GM12878 (cell line): ENCODE measurements at regions of chr6 and their contacts with region 1.

Region 1: DNA sequence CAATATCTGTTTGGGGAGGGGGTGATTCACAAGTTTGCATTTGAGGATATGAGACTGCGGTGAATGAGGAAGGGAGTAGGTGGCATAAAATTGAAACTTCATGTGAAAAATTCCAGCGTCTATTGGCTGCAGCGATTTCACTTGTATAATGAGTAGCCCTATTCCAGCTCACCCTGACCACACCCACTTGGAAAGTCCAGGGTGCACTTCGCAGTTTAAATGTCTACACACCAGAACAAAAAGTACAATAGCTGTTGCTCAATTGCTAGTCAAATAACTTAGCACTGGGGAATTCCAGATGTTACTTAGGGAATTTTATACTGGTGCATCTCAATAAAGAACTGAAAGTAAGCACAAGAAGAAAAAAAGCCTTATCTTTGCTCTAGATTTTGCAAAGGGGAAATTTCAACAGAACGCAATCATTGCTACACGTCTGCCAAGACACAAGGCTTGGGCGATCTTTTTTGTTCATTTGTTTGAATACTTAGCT is 6.3 kb downstream of the TNFAIP3 start:
- DNase-seq: peak; percentile 95
- ATAC-seq: peak; percentile 54
- H3K4me3 ChIP-seq: peak overlapping the region; percentile 99
- H3K27ac ChIP-seq: peak overlapping the region; percentile 88
- H3K4me1 ChIP-seq: no peaks in the 10 kb centered on the region
- H3K27me3 ChIP-seq: no peaks in the 10 kb centered on the region
- CTCF ChIP-seq: no peak
- EP300 ChIP-seq: peak; percentile 62 to 64; a peak in 2 of 4 replicates
- POLR2A ChIP-seq: 0 out of 2 replicates have a peak, but pooled peaks have one; percentile 27
- RAD21 ChIP-seq: no peak

Region 2: GRCh38 chr6:137661601-137662000 is 211.7 kb before region 1 on chr6:
- CTCF ChIA-PET with region 1: interaction called, 11 read pairs
- POLR2A ChIA-PET with region 1: interaction called, 3 read pairs
- RAD21 ChIA-PET with region 1: interaction called, 6 read pairs
- SMC1A ChIA-PET with region 1: interaction called, 7 read pairs
- in situ Hi-C with region 1: no loop called
- intact Hi-C with region 1: loop called (anchors 5 kb)
- DNase-seq: no peak
- ATAC-seq: peak; percentile 69
- H3K4me3 ChIP-seq: no peak overlapping the region
- H3K27ac ChIP-seq: no peak overlapping the region
- H3K4me1 ChIP-seq: peaks cover 5% of the 10 kb centered on the region; the same call in 1 of the 2 replicates
- H3K27me3 ChIP-seq: no peaks in the 10 kb centered on the region
- CTCF ChIP-seq: peak; percentile 51 to 75 (median 68)
- EP300 ChIP-seq: no peak
- POLR2A ChIP-seq: no peak
- RAD21 ChIP-seq: peak; percentile 66

Region 3: DNA sequence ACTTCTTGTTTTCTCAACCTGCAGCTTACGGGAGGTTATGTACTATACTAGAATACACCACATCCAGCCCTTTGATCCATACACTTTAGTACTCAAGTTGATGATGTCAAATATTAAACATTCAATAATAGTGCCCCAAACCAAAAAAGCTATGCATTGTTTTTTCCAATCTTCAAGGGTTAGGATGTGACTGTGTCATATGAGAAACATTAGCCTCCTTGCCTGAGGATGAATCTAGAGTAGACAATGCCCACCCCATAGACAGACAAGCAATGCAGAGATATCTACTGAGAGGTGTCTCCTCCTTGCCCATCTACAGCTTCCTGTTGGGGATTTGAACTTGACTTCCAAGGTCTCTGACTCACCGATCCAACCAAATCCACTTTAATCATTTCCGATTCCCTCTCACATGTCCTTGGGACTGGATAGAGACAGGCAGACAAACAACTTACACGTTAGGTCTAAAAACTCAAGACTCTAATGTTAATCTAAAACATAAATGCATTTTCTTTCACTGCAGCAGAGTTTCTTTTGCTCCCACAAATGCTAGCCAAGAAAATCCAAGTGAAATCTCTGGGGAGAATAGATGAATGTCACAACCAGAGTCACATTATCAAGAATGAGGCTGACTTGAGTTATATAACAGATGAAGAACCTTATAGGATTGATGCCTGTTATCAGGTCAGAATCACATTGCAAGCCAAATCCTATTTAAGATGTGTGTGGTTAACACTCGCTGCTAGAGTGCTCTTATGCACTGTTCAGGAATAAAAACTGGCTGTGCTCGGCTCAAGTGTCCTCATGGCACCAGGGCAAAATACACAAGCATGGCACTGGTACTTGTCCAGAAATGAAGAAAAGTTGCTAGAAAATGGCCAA is 81.8 kb before region 1 on chr6:
- CTCF ChIA-PET with region 1: interaction called, 12 read pairs
- POLR2A ChIA-PET with region 1: interaction called, 7 read pairs
- RAD21 ChIA-PET with region 1: interaction called, 117 read pairs
- SMC1A ChIA-PET with region 1: interaction called, 314 read pairs
- in situ Hi-C with region 1: no loop called
- intact Hi-C with region 1: no loop called
- DNase-seq: no peak
- ATAC-seq: peak; percentile 29
- H3K4me3 ChIP-seq: peak overlapping the region; percentile 25
- H3K27ac ChIP-seq: peak overlapping the region; percentile 89
- H3K4me1 ChIP-seq: peaks cover 18% of the 10 kb centered on the region
- H3K27me3 ChIP-seq: no peaks in the 10 kb centered on the region
- CTCF ChIP-seq: no peak
- EP300 ChIP-seq: no peak
- POLR2A ChIP-seq: no peak
- RAD21 ChIP-seq: no peak

Region 4: DNA sequence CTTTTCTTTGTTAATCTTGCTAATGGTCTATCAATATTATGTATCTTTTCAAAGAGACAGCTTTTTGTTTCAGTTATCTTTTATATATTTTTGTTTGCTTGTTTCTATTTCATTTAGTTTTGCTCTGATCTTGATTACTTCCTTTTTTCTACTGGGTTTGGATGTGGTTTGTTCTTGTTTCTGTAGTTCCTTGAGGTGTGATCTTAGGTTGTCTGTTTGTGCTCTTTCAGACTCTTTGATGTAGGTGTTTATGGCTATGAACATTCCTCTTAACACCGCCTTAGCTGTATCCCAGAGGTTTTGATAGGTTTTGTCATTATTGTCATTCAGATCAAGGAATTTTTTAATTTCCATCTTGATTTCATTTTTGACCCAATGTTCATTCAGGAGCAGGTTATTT is 33.1 kb before region 1 on chr6:
- CTCF ChIA-PET with region 1: no interaction called
- POLR2A ChIA-PET with region 1: no interaction called
- RAD21 ChIA-PET with region 1: no interaction called
- SMC1A ChIA-PET with region 1: no interaction called
- in situ Hi-C with region 1: no loop called
- intact Hi-C with region 1: no loop called
- DNase-seq: no peak
- ATAC-seq: no peak
- H3K4me3 ChIP-seq: no peak overlapping the region
- H3K27ac ChIP-seq: no peak overlapping the region
- H3K4me1 ChIP-seq: no peaks in the 10 kb centered on the region
- H3K27me3 ChIP-seq: no peaks in the 10 kb centered on the region
- CTCF ChIP-seq: no peak
- EP300 ChIP-seq: no peak
- POLR2A ChIP-seq: no peak
- RAD21 ChIP-seq: no peak

Region 5: DNA sequence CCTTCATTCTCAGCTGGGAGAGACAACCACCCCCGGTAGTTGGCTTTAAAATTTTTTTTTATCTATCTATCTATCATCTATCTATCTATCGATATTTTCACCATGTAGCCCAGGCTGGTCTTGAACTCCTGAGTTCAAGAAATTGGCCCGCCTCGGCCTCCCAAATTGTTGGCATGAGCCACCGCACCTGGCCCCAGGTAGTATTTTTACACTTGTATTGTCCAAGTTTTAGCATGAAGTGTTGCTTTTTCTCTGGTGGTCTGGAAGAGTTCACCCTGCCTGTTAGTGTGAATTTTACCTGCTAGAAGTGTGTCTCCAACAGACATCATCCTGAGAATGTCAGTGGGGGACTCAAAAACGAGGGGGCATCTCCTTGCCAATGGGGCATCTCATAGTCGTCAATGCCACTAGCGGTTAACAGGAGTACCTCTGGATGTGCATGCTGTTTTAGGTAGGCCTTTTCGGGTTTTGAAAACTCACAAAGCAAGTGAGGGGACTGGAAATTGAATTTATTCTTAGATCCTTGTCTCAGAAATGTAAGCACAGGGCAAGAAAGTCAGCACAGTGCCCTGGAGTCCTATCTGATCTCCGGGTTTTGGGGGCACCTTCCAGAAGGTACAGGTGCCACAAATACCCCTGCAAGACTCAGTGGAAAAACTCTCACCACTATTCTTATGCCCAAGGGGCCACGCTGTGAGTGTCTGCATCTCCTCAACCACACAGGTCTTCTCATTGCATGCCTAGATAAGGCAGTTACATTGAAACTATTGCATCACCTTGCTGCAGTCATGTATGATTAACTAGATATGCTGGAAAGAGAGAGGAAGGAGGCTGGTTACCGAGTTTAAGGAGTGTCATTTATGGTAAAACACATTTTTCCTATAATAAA is 30.9 kb after region 1 on chr6:
- CTCF ChIA-PET with region 1: interaction called, 64 read pairs
- POLR2A ChIA-PET with region 1: interaction called, 10 read pairs
- RAD21 ChIA-PET with region 1: interaction called, 29 read pairs
- SMC1A ChIA-PET with region 1: interaction called, 112 read pairs
- in situ Hi-C with region 1: no loop called
- intact Hi-C with region 1: loop called (anchors 1 kb)
- DNase-seq: no peak
- ATAC-seq: peak; percentile 79
- H3K4me3 ChIP-seq: peak overlapping the region; percentile 54; the same call in 1 of the 2 replicates
- H3K27ac ChIP-seq: peak overlapping the region; percentile 95
- H3K4me1 ChIP-seq: peaks cover 23% of the 10 kb centered on the region
- H3K27me3 ChIP-seq: no peaks in the 10 kb centered on the region
- CTCF ChIP-seq: no peak
- EP300 ChIP-seq: peak; percentile 69 to 72; a peak in 2 of 4 replicates
- POLR2A ChIP-seq: peak; percentile 41
- RAD21 ChIP-seq: peak; percentile 22; the same call in 1 of the 2 replicates

Region 6: DNA sequence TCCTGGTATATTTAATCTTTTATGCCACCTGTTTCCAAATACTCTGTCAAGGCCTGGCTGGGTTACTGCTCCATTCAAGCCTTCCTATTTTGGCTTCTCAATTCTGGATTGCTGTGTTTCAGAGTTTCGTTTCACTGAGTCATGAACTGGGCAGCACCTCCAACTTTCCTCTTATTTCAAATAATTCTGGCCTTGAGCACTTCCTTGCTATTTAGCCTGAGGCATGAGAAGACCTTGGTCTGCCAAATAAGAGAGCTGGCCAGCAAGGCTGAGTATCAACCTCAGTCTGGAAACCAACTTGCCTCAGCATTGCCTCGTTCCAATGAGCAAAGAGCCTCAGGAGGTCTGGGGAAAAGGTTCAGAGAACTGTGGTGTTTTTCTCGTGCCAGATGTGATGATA is 60.4 kb after region 1 on chr6:
- CTCF ChIA-PET with region 1: interaction called, 712 read pairs
- POLR2A ChIA-PET with region 1: interaction called, 41 read pairs
- RAD21 ChIA-PET with region 1: interaction called, 774 read pairs
- SMC1A ChIA-PET with region 1: interaction called, 1,237 read pairs
- in situ Hi-C with region 1: no loop called
- intact Hi-C with region 1: loop called (anchors 5 kb)
- DNase-seq: no peak
- ATAC-seq: no peak
- H3K4me3 ChIP-seq: no peak overlapping the region
- H3K27ac ChIP-seq: peak overlapping the region; percentile 53
- H3K4me1 ChIP-seq: peaks cover 28% of the 10 kb centered on the region
- H3K27me3 ChIP-seq: no peaks in the 10 kb centered on the region
- CTCF ChIP-seq: no peak
- EP300 ChIP-seq: no peak
- POLR2A ChIP-seq: no peak
- RAD21 ChIP-seq: no peak

Region 7: DNA sequence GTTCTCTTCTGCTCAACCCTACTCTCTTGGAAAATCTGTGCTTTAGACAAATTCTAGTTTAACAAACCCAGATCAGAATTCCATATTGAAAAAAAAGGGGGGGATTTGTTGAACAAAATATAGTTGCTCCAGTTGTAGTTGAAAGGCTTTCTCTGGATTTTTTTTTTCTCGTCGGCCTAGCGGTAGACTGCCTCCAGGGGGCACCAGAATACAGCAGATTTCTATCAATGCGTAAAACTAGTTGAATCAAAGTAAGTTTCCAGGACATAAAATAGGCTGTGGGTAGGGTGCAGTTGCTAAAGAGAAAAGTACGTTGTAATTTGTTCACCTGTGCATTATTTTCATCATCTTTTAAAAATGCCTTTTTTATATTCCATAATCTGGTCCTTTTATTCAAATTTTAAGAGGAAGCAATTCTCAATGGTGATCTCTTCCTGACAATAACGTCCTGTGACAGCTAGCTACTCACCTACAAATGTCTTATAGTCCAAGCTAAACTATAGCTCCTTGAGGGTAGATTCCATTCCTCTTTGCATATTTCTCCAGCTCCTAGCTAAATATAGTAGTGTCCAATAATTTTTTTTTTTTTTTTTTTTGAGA is 128.5 kb after region 1 on chr6:
- CTCF ChIA-PET with region 1: interaction called, 106 read pairs
- POLR2A ChIA-PET with region 1: interaction called, 3 read pairs
- RAD21 ChIA-PET with region 1: interaction called, 35 read pairs
- SMC1A ChIA-PET with region 1: interaction called, 50 read pairs
- in situ Hi-C with region 1: no loop called
- intact Hi-C with region 1: no loop called
- DNase-seq: no peak
- ATAC-seq: peak; percentile 62
- H3K4me3 ChIP-seq: no peak overlapping the region
- H3K27ac ChIP-seq: no peak overlapping the region
- H3K4me1 ChIP-seq: no peaks in the 10 kb centered on the region
- H3K27me3 ChIP-seq: no peaks in the 10 kb centered on the region
- CTCF ChIP-seq: peak; percentile 73 to 91 (median 85)
- EP300 ChIP-seq: no peak
- POLR2A ChIP-seq: no peak
- RAD21 ChIP-seq: peak; percentile 89